Tibial artery (tissue), 4 donors: ENCODE measurements at regions of chr12 and their contacts with region 1.

Region 1: DNA sequence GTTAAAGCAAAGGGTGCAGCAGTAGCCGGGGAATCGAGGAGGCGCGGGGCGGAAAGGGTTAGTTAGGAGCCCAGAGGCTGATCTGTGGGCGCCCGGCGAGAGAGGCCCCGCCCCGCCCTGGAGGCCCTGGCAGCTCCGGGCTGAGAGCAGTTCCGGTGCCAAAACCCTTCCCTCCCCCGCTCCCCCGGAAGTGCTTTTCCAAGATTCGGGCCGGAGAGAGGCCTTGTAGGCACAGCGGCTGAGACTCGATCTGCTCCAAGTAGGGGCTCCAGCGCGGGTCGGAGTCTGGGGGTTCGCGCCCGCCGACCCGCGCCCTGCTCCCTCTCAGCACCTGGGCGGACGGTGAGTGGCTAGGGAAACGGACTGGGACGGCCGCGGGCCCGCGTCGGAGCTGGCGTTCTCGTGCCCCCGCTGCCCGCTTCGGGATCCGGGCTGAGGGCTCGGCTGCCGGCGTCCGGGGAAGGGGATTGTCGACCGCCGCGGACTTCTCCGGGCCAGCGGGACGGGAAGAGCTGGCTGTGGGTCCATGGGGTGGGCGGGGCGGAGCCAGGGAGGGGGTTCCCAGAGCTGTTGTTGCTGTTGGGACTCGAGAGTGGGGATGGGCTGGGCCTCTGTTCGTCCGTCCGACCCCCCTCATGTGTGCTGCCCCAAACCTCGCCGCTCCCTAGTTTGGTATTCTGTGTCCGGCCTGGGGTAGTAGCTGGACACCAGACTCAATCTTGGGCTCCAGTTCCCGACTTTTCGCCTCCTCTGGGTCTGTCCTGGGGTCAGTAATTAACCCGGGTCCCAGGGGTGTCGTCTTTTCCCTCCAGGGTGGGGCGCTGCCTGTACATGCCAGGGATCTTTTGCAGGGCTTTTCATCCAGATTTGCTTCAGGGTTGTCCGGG is at the start of gene FRS2:
- DNase-seq: peak; percentile 88 to 95
- H3K4me3 ChIP-seq: peak within 1 kb of the TSS; percentile 77 to 99
- H3K27ac ChIP-seq: peak within 1 kb of the TSS; percentile 94 to 99
- H3K4me1 ChIP-seq: peaks cover 0 to 45% (median 36%) of the 10 kb centered on the region in 4 donors
- H3K27me3 ChIP-seq: no peaks in the 10 kb centered on the region
- CTCF ChIP-seq: peak in 1 of 2 experiments; percentile 9

Region 2: DNA sequence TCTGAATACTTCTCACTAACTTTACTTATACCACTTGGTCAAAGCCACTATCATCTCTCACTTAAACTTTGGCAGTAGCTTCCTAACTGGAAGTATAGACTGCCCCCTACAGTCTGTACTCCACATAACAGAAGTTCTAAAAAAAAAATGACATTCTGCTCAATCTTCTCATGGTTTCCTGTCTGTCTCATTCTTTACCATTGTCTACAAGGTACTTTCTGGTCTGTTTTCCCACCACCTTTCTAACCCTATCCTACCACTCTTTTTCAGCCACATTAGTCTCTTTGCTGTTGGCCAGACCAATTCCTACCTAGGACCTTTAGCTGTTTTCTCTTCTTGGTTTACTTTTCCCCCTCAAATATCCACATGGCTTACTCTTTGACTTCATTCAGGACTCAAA is 216.4 kb before region 1 on chr12:
- intact Hi-C with region 1: no loop called
- DNase-seq: no peak
- H3K4me3 ChIP-seq: no peak overlapping the region
- H3K27ac ChIP-seq: no peak overlapping the region
- H3K4me1 ChIP-seq: peaks cover 0 to 28% (median 4%) of the 10 kb centered on the region in 4 donors
- H3K27me3 ChIP-seq: no peaks in the 10 kb centered on the region
- CTCF ChIP-seq: peak; percentile 52 to 55

Region 3: DNA sequence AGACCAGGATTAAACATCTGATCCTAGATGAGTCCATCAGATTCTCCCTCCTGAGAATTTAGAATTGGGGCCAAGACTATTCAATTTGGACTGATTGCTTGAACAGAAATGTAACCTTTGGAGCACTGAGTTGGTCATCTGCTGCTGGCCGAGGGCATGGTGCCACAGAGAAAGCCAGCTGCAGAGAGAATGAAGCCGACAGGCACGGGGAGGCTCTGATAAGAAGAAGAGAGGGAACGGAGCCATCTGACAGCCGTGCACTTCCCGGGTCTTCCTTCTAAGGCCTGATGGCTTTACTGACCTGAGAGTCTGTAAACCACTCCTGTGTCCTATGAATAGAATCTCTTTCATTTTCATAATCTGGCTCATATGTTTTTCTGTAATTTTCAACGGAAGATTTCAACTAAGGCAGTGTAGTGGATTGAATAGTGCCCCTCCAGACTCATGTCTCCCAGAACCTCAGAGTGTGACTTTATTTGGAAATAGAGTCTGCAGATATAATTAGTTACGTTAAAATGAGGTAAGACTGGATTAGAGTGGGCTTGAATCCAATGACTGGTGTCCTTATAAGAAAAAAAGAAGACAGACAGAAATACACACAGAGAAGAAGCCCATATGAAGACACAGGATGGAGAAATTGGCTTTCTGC is 39.4 kb before region 1 on chr12:
- intact Hi-C with region 1: loop called (anchors 5 kb)
- DNase-seq: no peak
- H3K4me3 ChIP-seq: peak overlapping the region; percentile 4 to 22
- H3K27ac ChIP-seq: peak overlapping the region; percentile 69 to 71
- H3K4me1 ChIP-seq: peaks cover 0 to 54% (median 27%) of the 10 kb centered on the region in 4 donors
- H3K27me3 ChIP-seq: no peaks in the 10 kb centered on the region
- CTCF ChIP-seq: no peak